ENCODE measurements at regions of chr11 and their contacts with region 1.

Region 1: DNA sequence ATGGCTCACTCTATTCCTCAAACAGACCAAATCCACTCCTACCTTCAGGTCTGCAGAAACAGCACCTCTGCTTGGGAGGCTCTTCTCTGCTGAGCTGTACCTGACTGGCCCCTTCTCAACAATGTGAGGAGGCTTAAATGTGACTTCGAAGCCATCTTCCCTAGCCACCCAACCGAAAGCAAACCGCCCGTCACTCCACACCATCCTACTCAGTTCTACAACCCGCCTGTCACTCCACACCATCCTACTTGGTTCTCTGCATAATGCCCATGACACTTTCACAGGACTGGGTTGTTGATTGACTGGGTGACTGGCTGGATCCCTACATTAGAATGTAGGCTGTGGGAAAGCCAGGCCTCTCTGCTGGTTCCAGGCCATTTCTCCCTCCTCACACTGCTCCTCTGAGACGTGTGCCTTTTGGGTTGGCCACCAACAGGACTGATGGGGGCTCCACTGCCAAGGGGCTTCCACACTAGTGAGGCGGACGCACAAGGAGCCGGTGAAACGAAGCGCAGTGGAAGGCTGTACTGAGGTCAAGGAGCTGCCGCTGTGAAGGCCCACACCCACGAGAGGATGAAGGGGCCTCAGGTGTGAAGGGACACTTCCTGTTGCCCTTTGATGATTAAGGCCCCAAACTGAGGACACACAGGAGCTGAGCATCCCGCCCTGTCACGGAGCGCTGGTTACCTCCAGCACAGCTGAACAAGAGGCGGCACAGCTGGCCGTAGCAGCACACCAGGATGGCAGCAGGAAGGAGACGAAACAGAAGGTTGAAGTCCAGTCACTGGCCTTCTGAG is 47.5 kb upstream of the SPATA19 start:
- DNase-seq: no peak
- H3K4me3 ChIP-seq: no peak overlapping the region
- H3K27ac ChIP-seq: no peak overlapping the region
- H3K4me1 ChIP-seq: no peaks in the 10 kb centered on the region
- H3K27me3 ChIP-seq: no peaks in the 10 kb centered on the region
- CTCF ChIP-seq: no peak
- POLR2A ChIP-seq: no peak

Region 2: GRCh38 chr11:132284611-132285010 is 1608.2 kb before region 1 on chr11:
- intact Hi-C with region 1: loop called (anchors 5 kb)
- DNase-seq: no peak
- H3K4me3 ChIP-seq: no peak overlapping the region
- H3K27ac ChIP-seq: no peak overlapping the region
- H3K4me1 ChIP-seq: no peaks in the 10 kb centered on the region
- H3K27me3 ChIP-seq: peaks cover 0 to 4% of the 10 kb centered on the region in 2 donors
- CTCF ChIP-seq: no peak
- POLR2A ChIP-seq: no peak

Region 3: DNA sequence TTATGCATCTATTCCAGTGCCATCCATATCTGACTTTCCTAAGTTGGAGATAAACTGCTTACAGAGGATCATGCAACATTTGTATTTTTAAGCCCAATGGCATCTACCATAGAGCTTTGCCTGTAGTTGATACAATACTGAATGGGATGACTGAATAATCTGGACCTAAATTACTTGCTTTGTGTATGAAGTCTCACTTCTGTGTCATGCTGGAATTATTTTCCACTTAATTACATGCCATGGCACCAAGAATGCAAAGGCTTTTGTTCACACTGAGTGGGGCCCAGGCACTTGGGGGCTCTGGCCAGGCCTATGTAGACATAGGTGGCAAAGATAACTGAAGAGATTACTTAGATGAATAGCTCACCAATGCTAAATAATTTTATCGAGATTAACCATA is 412.1 kb before region 1 on chr11:
- intact Hi-C with region 1: no loop called
- DNase-seq: no peak
- H3K4me3 ChIP-seq: no peak overlapping the region
- H3K27ac ChIP-seq: no peak overlapping the region
- H3K4me1 ChIP-seq: no peaks in the 10 kb centered on the region
- H3K27me3 ChIP-seq: no peaks in the 10 kb centered on the region
- CTCF ChIP-seq: no peak
- POLR2A ChIP-seq: no peak

Region 4: DNA sequence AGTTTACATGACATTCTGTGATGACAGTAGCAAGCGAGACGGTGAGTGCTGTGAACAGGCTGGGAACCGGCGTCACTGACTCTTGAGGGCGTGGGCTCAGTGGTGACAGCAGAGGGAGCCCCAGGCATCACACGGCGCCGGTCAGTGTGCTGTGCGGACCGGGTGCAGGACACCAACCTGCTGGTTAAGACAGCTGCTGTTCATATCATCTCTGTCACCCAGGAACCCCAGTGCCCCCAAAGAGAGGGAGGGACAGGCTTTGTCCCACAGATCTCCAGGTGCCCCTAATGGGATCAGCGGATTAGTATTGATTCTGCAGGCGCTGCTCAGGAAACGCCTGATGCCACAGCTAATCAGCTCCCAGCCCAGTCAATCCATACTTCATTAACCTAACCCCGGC is 500.9 kb after region 1 on chr11:
- intact Hi-C with region 1: no loop called
- DNase-seq: no peak
- H3K4me3 ChIP-seq: no peak overlapping the region
- H3K27ac ChIP-seq: no peak overlapping the region
- H3K4me1 ChIP-seq: no peaks in the 10 kb centered on the region
- H3K27me3 ChIP-seq: peaks cover 0 to 7% of the 10 kb centered on the region in 2 donors
- CTCF ChIP-seq: no peak
- POLR2A ChIP-seq: no peak

Measured in breast epithelium (tissue), 4 donors.